Psoas muscle (tissue), 8 donors: ENCODE measurements at regions of chr11 and their contacts with region 1.

Region 1: DNA sequence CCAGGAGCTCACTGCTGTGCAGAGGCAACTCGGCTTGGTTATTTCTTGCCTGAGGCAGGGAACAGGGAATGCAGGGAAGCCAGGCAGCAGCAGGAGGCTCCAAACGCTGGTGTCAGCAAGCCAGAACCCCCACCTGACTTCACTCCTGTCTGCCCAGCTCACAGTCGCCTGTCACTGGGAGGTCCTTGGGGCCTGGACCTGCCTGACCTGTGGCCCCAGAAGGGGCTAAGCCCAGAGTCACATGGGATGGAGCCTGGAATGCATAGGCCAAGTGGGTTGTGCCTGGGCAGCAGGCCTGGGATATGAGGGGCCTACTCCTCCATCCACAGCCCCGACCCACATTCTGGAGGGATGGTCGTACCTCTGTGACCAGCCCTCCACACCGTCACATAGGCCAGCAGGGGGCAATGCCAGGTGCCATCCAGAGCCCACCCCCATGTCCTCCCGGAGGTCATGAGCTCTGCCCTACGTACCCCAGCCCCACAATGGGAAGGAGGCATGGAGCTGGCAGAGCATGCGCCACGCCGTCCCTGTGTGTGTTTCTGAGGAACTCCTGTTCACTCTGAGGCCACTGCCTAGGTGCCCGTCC is 5.2 kb downstream of the RASSF7 start:
- DNase-seq: no peak
- ATAC-seq: no peak
- H3K4me3 ChIP-seq: no peak overlapping the region
- H3K27ac ChIP-seq: no peak overlapping the region
- H3K4me1 ChIP-seq: peaks cover 12% of the 10 kb centered on the region
- H3K27me3 ChIP-seq: no peaks in the 10 kb centered on the region
- CTCF ChIP-seq: no peak

Region 2: DNA sequence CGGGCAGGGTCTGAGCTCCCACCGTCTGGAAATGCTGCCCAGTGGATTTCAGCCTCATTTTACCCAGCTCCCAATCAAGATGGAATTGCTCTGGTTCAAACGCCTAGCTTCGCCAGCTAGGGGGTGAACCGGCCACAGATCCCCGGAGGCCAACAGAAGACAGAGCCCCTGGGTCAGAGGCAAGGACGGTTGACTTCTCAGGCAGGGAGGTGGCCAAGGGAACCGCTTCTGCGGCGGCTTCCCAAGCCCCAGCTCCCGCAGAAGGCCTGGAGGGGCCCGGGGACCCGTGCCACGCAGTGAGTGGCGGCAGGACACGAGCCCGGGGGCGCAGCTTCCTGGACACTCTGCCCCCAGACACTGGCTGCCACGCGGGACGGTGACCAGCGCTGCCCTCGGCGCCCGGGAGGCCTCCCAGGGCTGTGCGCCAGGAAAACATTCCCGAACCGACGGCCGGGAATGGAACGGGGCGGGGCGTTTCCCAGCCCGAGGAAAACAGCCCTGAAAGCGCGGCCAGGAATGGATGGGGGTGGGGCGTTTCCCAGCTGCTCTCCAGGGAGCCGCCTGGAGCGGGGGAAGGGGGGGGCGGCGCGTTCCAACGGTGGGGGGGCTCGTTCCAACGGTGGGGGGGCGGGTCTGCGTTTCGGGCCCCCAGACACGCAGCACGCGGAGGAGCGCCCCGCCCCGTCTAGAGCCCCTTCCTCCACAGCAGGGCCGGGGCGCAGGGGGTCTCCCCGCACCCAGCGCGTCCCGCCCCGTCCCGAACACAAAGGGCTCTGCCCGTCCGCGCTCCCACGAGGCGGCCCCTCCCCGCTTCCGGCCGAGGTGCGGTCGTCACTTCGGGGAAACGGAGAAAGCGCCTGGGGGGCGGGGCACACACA is 210.2 kb before region 1 on chr11:
- intact Hi-C with region 1: no loop called
- DNase-seq: peak; percentile 95
- ATAC-seq: peak; percentile 77 to 87 (median 82)
- H3K4me3 ChIP-seq: peak overlapping the region; percentile 63
- H3K27ac ChIP-seq: peak overlapping the region; percentile 80
- H3K4me1 ChIP-seq: peaks cover 25% of the 10 kb centered on the region
- H3K27me3 ChIP-seq: peaks cover 0 to 18% (median 6%) of the 10 kb centered on the region in 3 donors
- CTCF ChIP-seq: no peak

Region 3: DNA sequence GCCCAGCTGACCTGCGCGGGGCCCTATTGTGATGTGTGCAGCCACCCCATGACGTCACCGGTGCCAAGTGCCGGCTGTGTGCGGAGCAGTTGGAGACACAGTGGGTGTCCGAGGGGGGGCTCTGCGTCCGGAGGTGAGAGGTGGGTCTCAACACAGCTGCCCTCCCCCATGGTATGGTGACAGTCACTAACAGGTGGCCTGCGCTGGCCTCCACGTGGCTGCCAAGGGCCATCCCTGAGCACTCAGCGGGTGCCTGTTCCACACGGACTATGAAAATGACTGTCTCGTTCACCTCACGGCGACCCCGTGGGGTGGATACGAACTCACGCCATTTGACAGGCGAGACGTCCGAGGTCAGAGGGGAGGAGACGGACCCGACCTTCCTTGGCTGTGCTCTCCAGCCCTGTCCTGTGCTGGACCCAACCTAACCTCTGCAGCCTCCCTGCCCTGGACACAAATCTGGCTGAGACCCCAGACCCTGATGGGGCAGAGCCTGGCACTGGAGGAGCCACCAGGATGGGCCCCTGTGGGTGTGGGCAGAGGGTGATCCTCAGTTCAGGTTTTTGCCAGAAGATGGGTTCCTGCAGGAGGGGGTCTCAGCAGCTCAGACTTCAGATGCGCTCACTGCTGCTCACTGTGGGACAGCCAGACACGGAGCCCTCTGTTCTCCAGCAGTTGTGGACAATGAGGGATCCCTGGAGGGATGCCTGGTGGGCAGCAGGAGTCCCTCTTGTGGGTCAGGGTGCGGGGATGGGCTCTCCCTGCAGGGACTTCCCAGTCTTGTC is 37.0 kb before region 1 on chr11:
- intact Hi-C with region 1: no loop called
- DNase-seq: peak in 1 of 2 donors; percentile 62
- ATAC-seq: peak; percentile 59 to 79 (median 74)
- H3K4me3 ChIP-seq: peak overlapping the region; percentile 15
- H3K27ac ChIP-seq: peak overlapping the region; percentile 15
- H3K4me1 ChIP-seq: peaks cover 22% of the 10 kb centered on the region
- H3K27me3 ChIP-seq: no peaks in the 10 kb centered on the region
- CTCF ChIP-seq: no peak

Region 4: GRCh38 chr11:554824-555472 is 11.1 kb before region 1 on chr11:
- intact Hi-C with region 1: loop called in 1 of 2 experiments (anchors 1 kb)
- DNase-seq: peak; percentile 64 to 79
- ATAC-seq: peak; percentile 68 to 88 (median 80)
- H3K4me3 ChIP-seq: peak overlapping the region; percentile 49
- H3K27ac ChIP-seq: no peak overlapping the region
- H3K4me1 ChIP-seq: peaks cover 5% of the 10 kb centered on the region
- H3K27me3 ChIP-seq: peaks cover 0 to 64% (median 36%) of the 10 kb centered on the region in 3 donors
- CTCF ChIP-seq: peak; percentile 54